Activated CD4-positive, alpha-beta memory T cell treated with anti-CD3 and anti-CD28 coated beads for 36 hours (primary cell): ENCODE measurements at regions of chr2 and their contacts with region 1.

Region 1: GRCh38 chr2:68709421-68709911 is 25.1 kb upstream of the ARHGAP25 start:
- DNase-seq: peak; percentile 31
- H3K4me3 Mint-ChIP-seq: no peak overlapping the region
- H3K27ac Mint-ChIP-seq: peak overlapping the region; percentile 55
- H3K4me1 Mint-ChIP-seq: peaks cover 31% of the 10 kb centered on the region
- H3K27me3 Mint-ChIP-seq: no peaks in the 10 kb centered on the region

Region 2: GRCh38 chr2:68594674-68595492 is 114.6 kb before region 1 on chr2:
- CTCF ChIA-PET with region 1: interaction called, 15 read pairs
- POLR2A ChIA-PET with region 1: no interaction called
- intact Hi-C with region 1: no loop called
- DNase-seq: peak; percentile 62
- H3K4me3 Mint-ChIP-seq: no peak overlapping the region
- H3K27ac Mint-ChIP-seq: no peak overlapping the region
- H3K4me1 Mint-ChIP-seq: peaks cover 8% of the 10 kb centered on the region
- H3K27me3 Mint-ChIP-seq: peaks cover 2% of the 10 kb centered on the region

Region 3: DNA sequence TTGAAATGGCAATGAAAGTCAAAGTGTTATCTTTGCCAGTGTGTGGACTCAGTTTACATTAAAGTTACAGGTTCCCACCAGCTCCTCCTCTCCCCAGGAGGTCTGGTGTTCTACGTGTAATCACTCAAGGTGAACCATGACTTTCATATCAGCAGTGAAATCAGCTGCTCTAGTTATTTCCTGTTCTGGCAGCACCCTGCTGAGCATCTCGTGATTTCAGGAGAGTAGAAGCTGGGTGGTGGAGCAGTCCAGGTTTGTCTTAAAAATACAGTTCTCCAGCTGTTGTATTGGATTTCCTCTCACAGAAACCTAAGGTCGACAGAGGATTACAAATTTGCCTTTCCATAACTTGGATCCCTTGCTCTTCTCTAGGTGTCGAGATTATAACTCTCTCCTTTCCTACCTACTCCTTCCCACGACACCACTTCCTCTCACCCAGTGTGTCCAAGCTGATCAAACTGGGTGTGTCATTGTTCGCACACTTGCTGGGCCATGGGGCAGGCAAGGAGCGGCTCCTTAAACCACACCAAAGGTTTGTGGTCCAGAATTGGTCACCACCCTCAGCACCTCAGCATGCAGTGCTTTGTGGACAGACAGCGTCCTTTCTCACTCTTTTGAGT is 12.1 kb after region 1 on chr2:
- CTCF ChIA-PET with region 1: interaction called, 22 read pairs
- POLR2A ChIA-PET with region 1: no interaction called
- intact Hi-C with region 1: no loop called
- DNase-seq: peak; percentile 62
- H3K4me3 Mint-ChIP-seq: peak overlapping the region; percentile 61
- H3K27ac Mint-ChIP-seq: peak overlapping the region; percentile 85
- H3K4me1 Mint-ChIP-seq: peaks cover 90% of the 10 kb centered on the region
- H3K27me3 Mint-ChIP-seq: no peaks in the 10 kb centered on the region

Region 4: GRCh38 chr2:68742626-68743415 is 33.4 kb after region 1 on chr2:
- CTCF ChIA-PET with region 1: interaction called, 23 read pairs
- POLR2A ChIA-PET with region 1: interaction called, 4 read pairs
- intact Hi-C with region 1: no loop called
- DNase-seq: no peak
- H3K4me3 Mint-ChIP-seq: peak overlapping the region; percentile 40
- H3K27ac Mint-ChIP-seq: peak overlapping the region; percentile 75
- H3K4me1 Mint-ChIP-seq: peaks cover 90% of the 10 kb centered on the region
- H3K27me3 Mint-ChIP-seq: no peaks in the 10 kb centered on the region

Region 5: DNA sequence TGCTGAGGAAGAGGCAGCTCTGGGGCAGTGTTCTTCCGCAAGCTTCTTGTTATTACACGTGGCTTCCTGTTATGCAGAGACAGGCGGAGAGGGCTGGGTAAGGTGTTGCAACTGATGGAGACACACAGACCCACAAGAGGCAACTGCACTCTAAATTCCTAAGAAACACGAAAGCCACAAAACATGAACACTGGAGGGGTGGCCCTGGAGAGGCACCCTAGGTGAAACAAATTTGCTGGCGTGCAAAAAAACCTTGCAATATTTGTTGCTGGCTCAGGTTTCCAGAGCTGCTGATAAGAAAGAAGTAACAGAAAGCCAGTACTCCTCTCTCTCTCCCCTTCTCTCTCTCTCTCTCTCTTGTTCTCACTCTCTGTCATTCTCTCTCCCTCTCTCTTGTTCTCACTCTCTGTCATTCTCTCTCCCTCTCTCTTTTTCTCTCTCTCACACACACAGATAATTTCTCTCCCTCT is 56.9 kb after region 1 on chr2:
- CTCF ChIA-PET with region 1: interaction called, 10 read pairs
- POLR2A ChIA-PET with region 1: no interaction called
- intact Hi-C with region 1: no loop called
- DNase-seq: peak; percentile 81
- H3K4me3 Mint-ChIP-seq: peak overlapping the region; percentile 76
- H3K27ac Mint-ChIP-seq: peak overlapping the region; percentile 98
- H3K4me1 Mint-ChIP-seq: peaks cover 96% of the 10 kb centered on the region
- H3K27me3 Mint-ChIP-seq: no peaks in the 10 kb centered on the region

Region 6: DNA sequence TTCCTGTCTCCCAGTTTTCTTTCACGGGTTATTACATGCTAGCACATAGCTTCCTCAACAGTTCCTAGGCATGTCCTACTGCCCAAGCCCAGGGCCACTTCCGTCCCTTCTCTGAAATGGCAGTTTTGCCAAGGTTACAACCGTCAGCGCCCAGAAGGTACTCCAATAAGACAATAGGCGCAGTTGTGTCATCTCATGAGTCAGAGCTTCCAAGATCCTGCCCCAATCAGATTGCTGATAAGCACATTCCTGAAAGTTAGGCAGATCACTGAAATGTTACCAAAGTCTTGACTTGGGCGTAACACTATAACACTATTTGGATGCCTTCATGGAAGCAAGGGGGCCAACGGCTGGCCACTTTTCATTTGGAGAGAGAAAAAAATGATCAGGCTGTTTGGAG is 209.0 kb after region 1 on chr2:
- CTCF ChIA-PET with region 1: interaction called, 118 read pairs
- POLR2A ChIA-PET with region 1: no interaction called
- intact Hi-C with region 1: no loop called
- DNase-seq: no peak
- H3K4me3 Mint-ChIP-seq: no peak overlapping the region
- H3K27ac Mint-ChIP-seq: no peak overlapping the region
- H3K4me1 Mint-ChIP-seq: no peaks in the 10 kb centered on the region
- H3K27me3 Mint-ChIP-seq: no peaks in the 10 kb centered on the region

Region 7: DNA sequence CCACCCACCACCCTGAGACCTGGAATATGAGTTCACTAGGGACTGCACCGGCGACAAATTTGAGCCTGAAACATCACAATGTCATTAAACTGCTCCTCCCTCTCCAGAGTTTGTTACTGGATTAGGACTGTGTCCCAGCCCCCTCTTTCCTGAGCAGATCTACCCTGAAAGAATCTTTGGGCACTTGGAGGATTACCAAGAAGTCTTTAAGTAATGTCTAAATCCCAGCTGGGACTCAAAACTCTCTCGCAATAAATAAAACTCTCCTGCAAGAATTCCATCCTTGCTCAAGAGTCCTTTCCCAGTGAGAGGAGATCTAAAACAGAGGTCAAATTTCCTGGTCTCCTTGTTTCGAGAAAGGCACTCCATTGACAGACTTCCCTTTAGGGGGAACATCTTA is 222.3 kb after region 1 on chr2:
- CTCF ChIA-PET with region 1: interaction called, 118 read pairs
- POLR2A ChIA-PET with region 1: no interaction called
- intact Hi-C with region 1: no loop called
- DNase-seq: no peak
- H3K4me3 Mint-ChIP-seq: no peak overlapping the region
- H3K27ac Mint-ChIP-seq: no peak overlapping the region
- H3K4me1 Mint-ChIP-seq: no peaks in the 10 kb centered on the region
- H3K27me3 Mint-ChIP-seq: peaks cover 2% of the 10 kb centered on the region